Panc1 (cell line): ENCODE measurements at regions of chr1 and their contacts with region 1.

Region 1: GRCh38 chr1:198620951-198621824 is 17.7 kb upstream of the PTPRC start:
- DNase-seq: no peak
- ATAC-seq: no peak
- H3K4me3 ChIP-seq: no peak overlapping the region
- H3K27ac ChIP-seq: no peak overlapping the region
- H3K4me1 ChIP-seq: no peaks in the 10 kb centered on the region
- H3K27me3 ChIP-seq: no peaks in the 10 kb centered on the region
- CTCF ChIP-seq: no peak

Region 2: DNA sequence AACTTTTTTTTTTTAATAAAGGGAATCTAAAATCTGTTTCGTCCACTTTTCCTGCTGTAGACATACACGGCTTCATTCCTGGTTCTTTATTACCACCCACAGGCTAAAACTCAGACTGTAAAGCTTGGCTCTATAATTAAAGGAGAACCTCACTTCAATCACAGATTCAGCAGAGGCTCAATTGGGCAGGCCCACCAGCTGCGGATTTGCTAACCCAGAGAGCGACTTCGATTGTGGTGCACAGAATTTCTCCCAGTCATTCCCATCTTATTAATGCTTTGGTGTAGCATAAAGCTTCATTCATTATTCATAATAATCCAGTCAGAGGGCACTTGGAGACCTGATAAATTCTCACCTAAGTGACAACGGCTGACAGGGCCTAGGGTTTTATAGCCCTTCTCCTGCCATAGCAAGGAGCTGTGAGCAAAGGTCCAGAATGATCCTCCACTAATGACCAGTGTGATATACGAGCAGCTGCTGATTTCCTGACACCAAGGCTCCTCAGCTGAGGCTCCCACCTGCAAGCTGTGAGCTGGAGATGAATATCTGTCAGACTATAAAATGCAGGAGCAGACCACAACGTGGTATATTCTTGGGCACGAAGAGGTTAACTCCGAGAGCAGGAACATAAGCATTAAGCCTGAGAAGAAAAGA is 229.7 kb before region 1 on chr1:
- CTCF ChIA-PET with region 1: no interaction called
- POLR2A ChIA-PET with region 1: interaction called, 11 read pairs
- in situ Hi-C with region 1: no loop called
- intact Hi-C with region 1: no loop called
- DNase-seq: no peak
- ATAC-seq: no peak
- H3K4me3 ChIP-seq: no peak overlapping the region
- H3K27ac ChIP-seq: no peak overlapping the region
- H3K4me1 ChIP-seq: no peaks in the 10 kb centered on the region
- H3K27me3 ChIP-seq: no peaks in the 10 kb centered on the region
- CTCF ChIP-seq: no peak

Region 3: DNA sequence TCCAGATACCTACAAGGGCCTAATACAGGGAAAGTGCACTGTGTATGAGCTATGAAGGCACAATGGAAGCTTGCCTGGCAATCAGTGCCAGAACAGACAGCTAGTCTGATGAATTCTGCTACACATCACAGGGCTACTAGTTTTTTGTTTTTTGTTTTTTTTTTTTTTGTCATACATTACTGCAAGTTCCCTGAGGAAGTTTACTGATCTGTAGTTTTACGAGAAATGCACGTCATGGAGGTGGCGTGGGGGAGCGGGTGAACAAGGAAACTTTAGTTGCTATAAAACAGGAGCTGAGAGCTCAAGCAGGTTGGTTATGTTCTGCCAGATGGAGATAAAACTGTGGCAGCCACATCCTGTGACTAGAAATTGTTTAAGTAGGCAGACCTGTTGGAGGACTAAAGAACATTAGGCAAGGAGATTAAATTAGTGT is 35.3 kb after region 1 on chr1:
- CTCF ChIA-PET with region 1: interaction called, 12 read pairs
- POLR2A ChIA-PET with region 1: no interaction called
- in situ Hi-C with region 1: no loop called
- intact Hi-C with region 1: no loop called
- DNase-seq: no peak
- ATAC-seq: peak; percentile 75
- H3K4me3 ChIP-seq: no peak overlapping the region
- H3K27ac ChIP-seq: peak overlapping the region; percentile 48; the same call in 1 of the 2 replicates
- H3K4me1 ChIP-seq: peaks cover 7% of the 10 kb centered on the region; the same call in 1 of the 2 replicates
- H3K27me3 ChIP-seq: no peaks in the 10 kb centered on the region
- CTCF ChIP-seq: no peak